ENCODE measurements at regions of chr1 and their contacts with region 1.

Region 1: GRCh38 chr1:160837558-160838205 is 25.0 kb downstream of the CD244 start:
- DNase-seq: peak; percentile 21
- H3K4me3 ChIP-seq: no peak overlapping the region
- H3K27ac ChIP-seq: no peak overlapping the region
- H3K4me1 ChIP-seq: no peaks in the 10 kb centered on the region
- H3K27me3 ChIP-seq: no peaks in the 10 kb centered on the region
- CTCF ChIP-seq: no peak

Region 2: GRCh38 chr1:160681067-160681890 is 156.4 kb before region 1 on chr1:
- CTCF ChIA-PET with region 1: no interaction called
- dilution Hi-C with region 1: no loop called
- in situ Hi-C with region 1: no loop called
- intact Hi-C with region 1: loop called (anchors 1 kb)
- DNase-seq: peak; percentile 61
- H3K4me3 ChIP-seq: no peak overlapping the region
- H3K27ac ChIP-seq: no peak overlapping the region
- H3K4me1 ChIP-seq: no peaks in the 10 kb centered on the region
- H3K27me3 ChIP-seq: no peaks in the 10 kb centered on the region
- CTCF ChIP-seq: peak; percentile 79 to 91

Region 3: GRCh38 chr1:160748181-160748877 is 89.4 kb before region 1 on chr1:
- CTCF ChIA-PET with region 1: no interaction called
- dilution Hi-C with region 1: loop called (anchors 25 kb)
- in situ Hi-C with region 1: no loop called
- intact Hi-C with region 1: loop called (anchors 1 kb)
- DNase-seq: peak; percentile 61
- H3K4me3 ChIP-seq: no peak overlapping the region
- H3K27ac ChIP-seq: no peak overlapping the region
- H3K4me1 ChIP-seq: peaks cover 16% of the 10 kb centered on the region
- H3K27me3 ChIP-seq: no peaks in the 10 kb centered on the region
- CTCF ChIP-seq: peak; percentile 25 to 42

Region 4: DNA sequence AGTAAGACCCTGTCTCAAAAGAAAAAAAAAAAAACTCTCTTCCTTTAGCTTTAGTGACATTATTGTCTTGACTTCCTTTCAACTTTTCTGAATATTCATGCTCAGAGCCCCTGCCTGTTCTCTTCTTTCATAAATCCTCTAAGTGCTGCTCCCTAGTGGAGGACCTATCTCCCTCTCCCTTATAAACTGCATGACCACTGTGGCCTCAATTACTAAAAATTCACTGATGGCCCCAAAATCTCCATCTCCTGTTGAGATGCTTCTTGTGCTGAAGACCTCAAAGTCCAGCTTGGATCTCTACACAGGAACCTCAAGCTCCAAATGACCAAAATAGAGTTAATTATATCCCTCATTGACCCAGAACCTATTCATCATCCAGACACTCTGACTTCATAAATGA is 39.5 kb after region 1 on chr1:
- CTCF ChIA-PET with region 1: no interaction called
- dilution Hi-C with region 1: no loop called
- in situ Hi-C with region 1: no loop called
- intact Hi-C with region 1: loop called (anchors 5 kb)
- DNase-seq: no peak
- H3K4me3 ChIP-seq: no peak overlapping the region
- H3K27ac ChIP-seq: no peak overlapping the region
- H3K4me1 ChIP-seq: no peaks in the 10 kb centered on the region
- H3K27me3 ChIP-seq: no peaks in the 10 kb centered on the region
- CTCF ChIP-seq: no peak

Region 5: DNA sequence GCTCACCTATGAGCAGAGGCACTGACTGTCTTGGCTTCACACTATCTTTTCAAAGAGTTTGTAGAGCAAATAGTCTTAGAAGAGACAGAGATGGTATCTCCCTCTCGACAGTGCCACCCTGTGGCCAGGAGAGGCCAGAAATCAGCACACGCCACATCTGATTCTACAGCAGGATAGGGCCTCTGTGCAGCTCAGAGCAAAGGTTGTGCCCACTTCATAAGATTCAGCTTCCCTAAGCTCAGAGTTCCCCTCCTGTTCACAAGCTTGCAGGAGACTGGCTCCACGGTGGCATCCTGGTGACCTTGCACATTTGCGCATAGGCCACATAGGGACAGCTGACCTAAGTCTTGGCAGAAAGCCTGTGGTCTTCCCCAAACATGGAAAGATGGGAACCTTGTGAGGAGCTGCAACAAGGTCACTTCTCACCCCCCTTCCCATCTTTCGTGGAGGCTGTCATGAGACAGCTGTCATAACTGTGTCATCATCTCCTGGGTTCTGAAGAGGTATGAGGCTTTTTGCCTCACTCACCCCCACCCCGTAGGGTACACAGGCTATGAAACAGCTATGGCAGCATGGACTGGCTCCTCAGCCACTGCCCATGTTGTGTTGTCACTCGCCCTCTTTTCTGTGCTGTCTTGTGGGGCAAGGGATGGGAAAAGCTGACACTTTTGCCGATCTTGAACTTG is 113.9 kb after region 1 on chr1:
- CTCF ChIA-PET with region 1: no interaction called
- dilution Hi-C with region 1: no loop called
- in situ Hi-C with region 1: loop called (anchors 10 kb)
- intact Hi-C with region 1: loop called (anchors 1 kb)
- DNase-seq: peak; percentile 69
- H3K4me3 ChIP-seq: no peak overlapping the region
- H3K27ac ChIP-seq: peak overlapping the region; percentile 70
- H3K4me1 ChIP-seq: peaks cover 38% of the 10 kb centered on the region
- H3K27me3 ChIP-seq: no peaks in the 10 kb centered on the region
- CTCF ChIP-seq: peak; percentile 84 to 86

Region 6: GRCh38 chr1:160981584-160982411 is 144.1 kb after region 1 on chr1:
- CTCF ChIA-PET with region 1: no interaction called
- dilution Hi-C with region 1: no loop called
- in situ Hi-C with region 1: no loop called
- intact Hi-C with region 1: loop called (anchors 2 kb)
- DNase-seq: no peak
- H3K4me3 ChIP-seq: peak overlapping the region; percentile 15 to 32 (median 20)
- H3K27ac ChIP-seq: no peak overlapping the region
- H3K4me1 ChIP-seq: peaks cover 4% of the 10 kb centered on the region
- H3K27me3 ChIP-seq: no peaks in the 10 kb centered on the region
- CTCF ChIP-seq: no peak

Region 7: DNA sequence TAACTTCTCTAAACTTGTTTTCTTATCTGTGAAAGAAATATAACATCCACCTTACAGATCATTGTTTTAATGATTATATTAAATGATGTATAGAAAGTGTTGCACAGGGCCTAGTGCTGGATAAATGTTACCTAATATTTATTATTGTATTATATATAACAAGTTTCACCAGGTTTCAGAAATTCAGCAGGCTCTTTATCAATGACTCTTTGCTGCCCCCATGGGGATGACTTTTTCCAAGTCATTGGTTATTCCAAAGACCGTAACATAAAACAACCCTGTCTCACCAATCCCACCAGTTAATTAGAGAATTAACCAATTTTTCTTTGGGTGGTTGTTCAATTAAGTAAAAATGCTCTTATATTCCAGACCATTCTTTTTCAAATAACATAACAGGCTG is 302.1 kb after region 1 on chr1:
- CTCF ChIA-PET with region 1: no interaction called
- dilution Hi-C with region 1: no loop called
- in situ Hi-C with region 1: no loop called
- intact Hi-C with region 1: loop called (anchors 2 kb)
- DNase-seq: peak; percentile 27
- H3K4me3 ChIP-seq: no peak overlapping the region
- H3K27ac ChIP-seq: no peak overlapping the region
- H3K4me1 ChIP-seq: no peaks in the 10 kb centered on the region
- H3K27me3 ChIP-seq: no peaks in the 10 kb centered on the region
- CTCF ChIP-seq: peak; percentile 37 to 57